ENCODE measurements at regions of chr16 and their contacts with region 1.

Region 1: GRCh38 chr16:12067714-12068401 is 91.3 kb downstream of the SNX29 start:
- DNase-seq: peak; percentile 40
- H3K4me3 Mint-ChIP-seq: no peak overlapping the region
- H3K27ac Mint-ChIP-seq: no peak overlapping the region
- H3K4me1 Mint-ChIP-seq: no peaks in the 10 kb centered on the region
- H3K27me3 Mint-ChIP-seq: no peaks in the 10 kb centered on the region

Region 2: GRCh38 chr16:10954903-10955302 is 1113.0 kb before region 1 on chr16:
- intact Hi-C with region 1: loop called (anchors 2 kb)
- DNase-seq: no peak
- H3K4me3 Mint-ChIP-seq: peak overlapping the region; percentile 23
- H3K27ac Mint-ChIP-seq: no peak overlapping the region
- H3K4me1 Mint-ChIP-seq: peaks cover 28% of the 10 kb centered on the region
- H3K27me3 Mint-ChIP-seq: no peaks in the 10 kb centered on the region

Region 3: GRCh38 chr16:11734025-11734652 is 333.7 kb before region 1 on chr16:
- intact Hi-C with region 1: loop called (anchors 10 kb)
- DNase-seq: no peak
- H3K4me3 Mint-ChIP-seq: peak overlapping the region; percentile 13
- H3K27ac Mint-ChIP-seq: peak overlapping the region; percentile 72
- H3K4me1 Mint-ChIP-seq: peaks cover 89% of the 10 kb centered on the region
- H3K27me3 Mint-ChIP-seq: no peaks in the 10 kb centered on the region

Region 4: DNA sequence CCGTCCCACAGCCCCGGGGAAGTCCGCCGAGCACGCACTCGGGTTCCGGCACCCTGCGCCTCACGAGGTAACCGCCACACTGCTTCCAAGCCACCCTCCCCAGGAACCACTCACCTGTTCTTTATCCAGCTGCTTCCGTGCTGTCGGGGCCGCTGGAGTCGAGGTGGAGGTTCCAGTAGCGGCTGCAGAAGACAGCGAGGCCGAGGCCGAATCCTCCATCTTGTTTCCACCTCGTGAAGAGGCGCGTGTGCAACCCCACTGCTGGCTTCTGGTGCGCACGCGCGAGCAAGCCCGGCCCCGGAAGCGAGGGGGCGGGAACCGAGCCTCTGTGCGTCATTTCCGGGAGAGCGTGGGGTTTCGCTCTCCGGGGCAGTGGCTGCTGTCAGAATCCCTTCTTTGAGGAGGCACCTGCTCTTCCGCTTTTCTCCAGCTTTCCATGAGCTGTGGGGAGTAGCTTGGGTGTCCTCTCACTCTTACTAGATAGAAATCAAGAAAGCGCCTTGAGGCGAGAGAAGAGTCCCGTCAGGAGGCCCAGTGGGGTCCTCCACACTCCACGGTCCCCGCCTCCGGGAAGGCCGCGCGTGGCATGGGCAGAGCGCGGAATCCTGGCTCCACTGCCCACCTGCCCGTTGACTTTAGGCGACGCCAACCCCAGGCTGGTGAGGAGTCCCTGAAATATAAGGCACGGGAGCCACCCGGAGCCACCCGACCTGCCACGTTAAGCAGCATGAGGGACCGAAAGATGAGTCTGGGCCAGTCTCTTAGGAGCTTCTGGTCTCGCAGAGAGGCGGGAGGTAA is 216.4 kb before region 1 on chr16 and contains the start of gene RSL1D1:
- intact Hi-C with region 1: loop called (anchors 5 kb)
- DNase-seq: peak; percentile 95
- H3K4me3 Mint-ChIP-seq: peak within 1 kb of the TSS; percentile 99
- H3K27ac Mint-ChIP-seq: peak within 1 kb of the TSS; percentile 97
- H3K4me1 Mint-ChIP-seq: peaks cover 44% of the 10 kb centered on the region
- H3K27me3 Mint-ChIP-seq: no peaks in the 10 kb centered on the region
- total RNA-seq, gene RSL1D1: 345 and 369 TPM in 2 replicates

Region 5: DNA sequence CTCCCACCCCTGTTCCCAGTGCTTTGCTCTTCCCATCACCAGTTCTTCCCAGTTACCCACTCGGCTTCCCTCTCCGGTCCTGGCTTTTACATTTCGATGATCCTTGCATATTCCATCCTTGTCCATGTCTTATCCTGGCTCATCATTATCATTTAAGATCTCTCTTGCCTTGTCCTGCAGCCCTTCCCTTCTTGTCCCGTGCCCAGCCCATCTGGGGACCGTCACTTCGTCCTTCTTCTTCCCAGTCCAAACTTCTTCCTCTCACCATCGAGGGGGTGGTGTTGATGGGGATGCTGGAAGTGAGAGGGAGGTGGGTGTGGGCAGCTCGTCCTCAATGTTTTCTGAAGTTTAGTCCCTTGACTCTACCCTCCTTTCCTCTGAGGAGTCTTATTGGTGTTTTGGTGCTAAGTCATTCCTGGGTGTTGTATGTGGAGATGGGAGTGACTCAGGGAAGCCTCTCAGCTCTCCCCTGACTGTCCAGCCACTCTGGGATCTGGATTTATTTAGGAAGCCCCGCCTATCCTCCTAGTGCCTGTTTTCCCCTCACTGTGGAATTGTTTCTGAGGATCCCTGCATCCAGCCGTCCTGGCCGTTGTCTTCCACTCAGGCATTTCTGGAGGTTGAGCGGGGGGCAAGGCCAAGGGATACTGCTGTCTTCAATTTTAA is 90.3 kb before region 1 on chr16:
- intact Hi-C with region 1: loop called (anchors 2 kb)
- DNase-seq: no peak
- H3K4me3 Mint-ChIP-seq: peak overlapping the region; percentile 96
- H3K27ac Mint-ChIP-seq: peak overlapping the region; percentile 84
- H3K4me1 Mint-ChIP-seq: peaks cover 30% of the 10 kb centered on the region
- H3K27me3 Mint-ChIP-seq: peaks cover 2% of the 10 kb centered on the region